ENCODE measurements at regions of chr6 and their contacts with region 1.

Region 1: DNA sequence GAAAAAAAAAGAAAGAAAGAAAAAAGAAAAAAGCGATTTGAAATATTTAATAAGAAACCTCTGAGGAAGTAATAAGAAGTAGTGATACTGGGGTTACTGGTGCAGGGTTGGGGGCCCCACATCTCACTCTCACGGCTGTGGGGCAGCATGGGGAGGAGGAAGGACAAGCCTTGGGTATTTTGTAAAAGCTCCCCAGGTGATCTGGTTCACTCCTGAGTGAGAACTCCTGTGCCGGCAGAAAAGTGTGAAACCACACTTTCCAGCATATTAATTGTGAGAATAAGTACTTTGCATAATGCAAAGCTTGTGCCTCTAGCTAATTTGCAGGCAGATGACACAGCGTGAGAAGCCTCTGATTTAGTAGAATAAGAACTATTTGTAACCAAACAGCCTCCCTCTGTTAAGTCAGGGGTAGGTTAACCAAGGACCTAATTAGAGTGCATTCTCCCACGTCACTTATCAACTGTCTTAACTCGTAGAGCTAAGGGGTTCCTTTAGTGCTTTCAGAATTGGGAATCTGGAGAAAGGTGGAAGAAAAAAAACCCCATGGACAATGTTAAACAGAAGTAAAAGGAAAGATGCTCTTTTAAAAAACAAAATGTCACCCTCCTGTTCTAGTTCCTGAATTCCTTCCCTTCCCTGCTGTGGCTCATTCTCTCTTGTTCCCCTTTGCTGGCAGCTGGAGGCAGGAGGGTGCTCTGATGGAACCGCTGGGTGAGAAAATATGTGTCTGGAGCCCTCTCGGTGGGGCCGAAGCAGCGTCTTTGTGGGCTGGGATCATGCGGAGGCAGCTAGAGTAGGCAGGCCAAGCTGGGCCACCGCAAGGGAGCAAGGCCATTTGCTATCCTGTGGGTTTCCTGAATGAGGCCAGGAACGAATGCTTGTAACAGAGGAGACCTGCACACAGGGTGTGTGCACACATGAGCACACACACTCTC is 108.7 kb downstream of the FYN start:
- DNase-seq: no peak
- H3K4me3 Mint-ChIP-seq: peak overlapping the region; percentile 53
- H3K27ac Mint-ChIP-seq: peak overlapping the region; percentile 93
- H3K4me1 Mint-ChIP-seq: peaks cover 95% of the 10 kb centered on the region
- H3K27me3 Mint-ChIP-seq: no peaks in the 10 kb centered on the region

Region 2: GRCh38 chr6:111709615-111710398 is 54.7 kb before region 1 on chr6:
- intact Hi-C with region 1: loop called (anchors 5 kb)
- DNase-seq: peak; percentile 43
- H3K4me3 Mint-ChIP-seq: no peak overlapping the region
- H3K27ac Mint-ChIP-seq: peak overlapping the region; percentile 49
- H3K4me1 Mint-ChIP-seq: peaks cover 44% of the 10 kb centered on the region
- H3K27me3 Mint-ChIP-seq: no peaks in the 10 kb centered on the region

Region 3: DNA sequence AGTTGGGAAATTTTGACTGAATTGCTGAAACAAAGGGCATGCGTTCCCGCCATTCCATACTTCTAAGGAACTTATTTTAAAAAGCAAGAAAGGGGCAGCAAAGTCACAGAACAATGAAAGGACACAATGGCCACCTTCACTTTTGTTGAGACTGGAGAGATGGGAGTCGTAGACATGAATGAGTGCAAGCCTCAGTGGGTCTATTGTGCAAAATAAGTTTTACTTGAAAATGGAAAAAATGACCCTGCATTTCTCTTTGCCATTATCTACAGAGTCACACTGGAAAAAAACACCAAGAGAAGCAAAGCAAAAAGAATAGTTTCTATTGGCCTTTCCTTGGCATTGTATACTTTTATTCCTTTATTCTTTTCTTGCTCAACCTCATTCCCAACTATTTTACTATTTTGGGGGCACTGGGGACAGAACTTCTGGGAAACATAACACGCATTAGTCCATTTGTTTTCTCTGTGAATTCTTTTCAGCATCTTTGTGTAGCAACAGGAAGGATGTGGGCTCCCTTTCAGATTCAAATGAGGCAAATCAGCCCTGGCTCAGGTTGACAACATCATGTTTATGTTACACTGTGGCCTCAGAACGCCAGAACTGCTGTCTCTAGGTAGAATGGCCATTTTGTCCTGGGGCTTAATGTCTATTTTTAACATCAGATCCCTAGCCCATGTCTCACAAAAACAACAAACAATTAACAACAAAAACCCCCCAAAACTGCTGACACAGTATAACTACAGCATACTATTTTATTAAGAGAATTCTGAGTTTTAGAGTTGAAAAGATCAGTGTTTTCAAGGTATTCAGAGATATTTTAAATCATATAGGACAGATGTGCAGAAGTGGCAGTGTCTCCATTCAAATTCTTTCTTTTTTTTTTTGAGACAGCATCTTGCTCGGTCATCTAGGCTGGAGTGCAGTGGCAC is 13.5 kb before region 1 on chr6:
- intact Hi-C with region 1: loop called (anchors 1 kb)
- DNase-seq: peak; percentile 53
- H3K4me3 Mint-ChIP-seq: peak overlapping the region; percentile 50
- H3K27ac Mint-ChIP-seq: peak overlapping the region; percentile 96
- H3K4me1 Mint-ChIP-seq: peaks cover 80% of the 10 kb centered on the region
- H3K27me3 Mint-ChIP-seq: no peaks in the 10 kb centered on the region

Region 4: DNA sequence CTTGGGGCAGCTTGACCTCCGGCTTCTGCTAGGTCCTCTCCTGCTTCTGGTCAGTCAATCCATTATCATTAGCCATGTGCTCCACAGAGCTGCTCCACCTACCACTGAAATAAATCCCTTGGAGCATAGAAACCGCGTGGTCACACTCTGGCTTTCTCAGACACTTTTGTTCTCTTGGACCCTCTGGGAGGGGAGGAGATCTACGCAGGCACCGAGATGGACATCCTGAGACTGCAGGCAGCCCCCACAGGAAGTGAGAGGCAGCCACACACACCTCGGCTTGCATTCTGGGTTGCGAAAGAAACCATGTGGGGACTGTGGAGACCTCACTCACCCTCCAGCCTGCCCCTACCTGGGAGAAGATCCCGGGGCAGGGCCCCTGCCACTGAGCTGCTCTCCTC is 29.2 kb after region 1 on chr6:
- intact Hi-C with region 1: loop called (anchors 2 kb)
- DNase-seq: no peak
- H3K4me3 Mint-ChIP-seq: peak overlapping the region; percentile 63
- H3K27ac Mint-ChIP-seq: peak overlapping the region; percentile 94
- H3K4me1 Mint-ChIP-seq: peaks cover 71% of the 10 kb centered on the region
- H3K27me3 Mint-ChIP-seq: no peaks in the 10 kb centered on the region

Region 5: DNA sequence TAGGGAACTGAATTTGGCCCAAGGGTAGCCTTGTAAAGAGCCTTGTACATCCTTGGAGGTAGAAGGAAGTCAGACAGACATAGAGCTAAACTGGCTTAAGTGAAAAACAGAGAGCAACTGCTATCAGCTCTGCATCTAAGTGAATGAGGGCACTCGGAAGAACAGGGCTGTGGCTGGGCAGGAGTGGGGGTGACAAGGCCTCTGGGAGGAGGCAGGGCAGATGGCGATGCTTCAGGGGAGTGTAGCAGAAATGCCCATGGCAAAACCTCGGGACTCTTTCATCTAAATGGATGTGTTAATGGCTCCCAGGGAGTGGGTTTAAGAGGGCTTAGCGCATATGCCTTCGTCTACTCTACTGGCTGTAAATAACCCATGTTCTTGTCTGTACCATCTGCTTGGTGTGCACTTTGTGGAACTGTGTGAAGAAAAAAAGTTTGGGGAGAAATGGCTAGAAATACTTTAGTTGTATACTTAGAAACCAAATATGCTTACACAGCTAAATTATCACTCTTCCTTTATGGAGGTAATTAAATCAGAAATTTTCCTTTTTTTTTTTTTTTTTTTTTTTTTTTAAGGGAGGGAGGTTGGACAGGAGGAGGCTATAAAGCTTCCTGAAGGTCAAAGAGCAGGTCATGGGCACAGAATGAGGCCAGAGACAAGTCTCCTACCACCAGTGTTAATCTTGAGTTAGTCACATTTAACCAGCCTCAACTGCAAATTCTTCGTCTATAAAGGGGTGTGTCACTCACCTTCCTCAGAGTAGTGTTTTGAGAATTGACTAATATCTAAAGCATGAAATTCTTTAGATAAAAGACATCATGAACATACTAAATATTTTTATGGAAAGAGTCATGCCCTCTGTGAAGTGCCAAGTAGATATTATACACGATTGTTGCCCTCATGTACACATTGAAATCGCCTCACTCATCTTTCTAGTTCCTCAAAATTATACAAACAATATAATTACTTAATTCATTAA is 47.8 kb after region 1 on chr6:
- intact Hi-C with region 1: loop called (anchors 1 kb)
- DNase-seq: no peak
- H3K4me3 Mint-ChIP-seq: peak overlapping the region; percentile 13
- H3K27ac Mint-ChIP-seq: peak overlapping the region; percentile 88
- H3K4me1 Mint-ChIP-seq: peaks cover 71% of the 10 kb centered on the region
- H3K27me3 Mint-ChIP-seq: no peaks in the 10 kb centered on the region

Region 6: DNA sequence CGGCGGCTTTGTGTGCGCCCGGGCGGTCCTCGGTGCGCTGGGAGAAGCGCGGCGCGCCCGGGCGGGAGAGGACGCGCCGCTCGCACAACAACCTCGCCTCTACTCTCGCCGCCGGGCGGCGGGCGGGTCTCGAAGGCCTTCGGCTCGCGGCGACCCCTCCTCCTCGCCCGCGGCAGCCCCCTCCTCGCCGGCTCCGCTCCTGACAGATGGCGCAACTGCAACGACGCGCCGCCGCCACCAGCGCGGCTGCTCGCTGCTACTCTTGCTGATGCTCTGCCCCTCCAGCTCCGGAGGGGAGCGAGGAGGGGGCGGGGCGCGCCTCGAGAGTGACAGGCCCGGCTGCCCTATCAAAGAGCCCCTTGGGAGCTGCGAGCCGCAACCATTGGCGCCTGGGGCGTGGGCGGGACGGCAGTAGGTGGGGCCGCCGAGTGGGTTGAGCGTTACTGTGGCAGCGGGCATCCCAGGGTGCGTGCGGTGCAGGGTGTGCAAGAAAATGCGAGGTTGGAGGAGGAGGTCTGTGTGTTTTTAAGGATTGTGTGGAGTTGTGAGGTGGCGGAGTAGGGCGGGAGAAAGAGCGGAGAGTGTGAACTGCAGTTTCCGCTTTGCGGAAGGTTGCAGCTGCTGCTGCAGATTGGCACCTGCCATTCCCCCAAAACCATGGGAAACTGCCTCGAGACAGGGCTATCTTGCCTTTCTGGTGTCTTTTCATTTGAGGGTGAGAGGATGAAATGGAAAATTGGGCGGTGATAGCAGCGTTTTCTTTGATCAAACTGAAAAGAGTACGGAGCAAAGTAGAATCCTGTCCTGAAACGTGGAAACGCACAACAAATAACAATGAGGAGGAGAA is 108.9 kb after region 1 on chr6 and contains the start of gene FYN:
- intact Hi-C with region 1: loop called (anchors 2 kb)
- DNase-seq: peak; percentile 98
- H3K4me3 Mint-ChIP-seq: peak within 1 kb of the TSS; percentile 97
- H3K27ac Mint-ChIP-seq: peak within 1 kb of the TSS; percentile 94
- H3K4me1 Mint-ChIP-seq: peaks cover 40% of the 10 kb centered on the region
- H3K27me3 Mint-ChIP-seq: peaks cover 2% of the 10 kb centered on the region
- total RNA-seq, gene FYN: 359 TPM in 2 replicates

Region 7: GRCh38 chr6:112018619-112019416 is 254.3 kb after region 1 on chr6:
- intact Hi-C with region 1: loop called (anchors 5 kb)
- DNase-seq: no peak
- H3K4me3 Mint-ChIP-seq: no peak overlapping the region
- H3K27ac Mint-ChIP-seq: no peak overlapping the region
- H3K4me1 Mint-ChIP-seq: peaks cover 68% of the 10 kb centered on the region
- H3K27me3 Mint-ChIP-seq: no peaks in the 10 kb centered on the region